Left colon (tissue), 2 donors: ENCODE measurements at regions of chr9 and their contacts with region 1.

Region 1: GRCh38 chr9:137406876-137407589 is 15.9 kb downstream of the EXD3 start:
- DNase-seq: peak; percentile 64 to 84
- ATAC-seq: peak; percentile 86

Region 2: DNA sequence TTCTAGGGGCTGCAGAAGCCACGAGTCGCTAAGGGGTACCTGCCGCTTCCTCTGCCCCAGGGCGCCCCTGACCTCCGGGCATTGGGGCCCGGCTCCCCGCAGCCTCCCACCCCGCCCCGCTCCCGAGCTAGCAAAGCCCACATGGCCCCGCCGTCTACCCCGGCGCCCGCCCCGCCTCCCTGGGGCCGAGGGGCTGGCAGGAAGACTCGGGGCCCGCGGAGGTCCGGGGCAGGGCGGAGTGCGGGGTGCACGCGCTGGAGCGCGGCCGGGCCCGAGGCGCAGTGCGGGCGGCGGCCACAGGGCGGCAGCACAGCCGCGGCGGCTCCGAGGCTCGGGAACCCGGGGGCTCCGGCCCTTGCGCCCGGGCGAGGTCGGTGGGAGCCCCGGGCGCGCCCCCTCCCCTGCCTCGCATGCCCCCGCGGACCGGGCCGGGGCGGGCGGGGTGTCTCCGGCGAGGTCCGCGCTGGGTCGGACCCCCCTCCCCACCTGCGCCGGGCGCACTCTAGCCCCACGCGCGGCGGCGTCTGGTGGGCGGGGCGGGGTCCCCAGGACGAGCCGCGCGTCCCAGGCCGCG is 111.7 kb before region 1 on chr9:
- intact Hi-C with region 1: loop called in 1 of 2 experiments (anchors 10 kb)
- DNase-seq: peak; percentile 36 to 57
- ATAC-seq: peak; percentile 15

Region 3: GRCh38 chr9:137316012-137316976 is 90.7 kb before region 1 on chr9:
- intact Hi-C with region 1: loop called in 1 of 2 experiments (anchors 10 kb)
- DNase-seq: peak; percentile 38 to 75
- ATAC-seq: peak; percentile 33

Region 4: GRCh38 chr9:137350696-137351584 is 56.1 kb before region 1 on chr9:
- intact Hi-C with region 1: no loop called
- DNase-seq: no peak
- ATAC-seq: peak; percentile 23

Region 5: GRCh38 chr9:137836831-137837241 is 429.8 kb after region 1 on chr9:
- intact Hi-C with region 1: no loop called
- DNase-seq: no peak
- ATAC-seq: peak; percentile 12